ENCODE measurements at regions of chr4 and their contacts with region 1.

Region 1: GRCh38 chr4:75514131-75514948 is at the starts of genes RCHY1 and THAP6:
- DNase-seq: peak; percentile 90 to 94 (median 92)
- H3K4me3 ChIP-seq: peak within 1 kb of the TSS; percentile 46
- H3K27ac ChIP-seq: peak within 1 kb of the TSS; percentile 88 to 90
- H3K4me1 ChIP-seq: peaks cover 10% of the 10 kb centered on the region
- H3K27me3 ChIP-seq: no peaks in the 10 kb centered on the region
- CTCF ChIP-seq: peak in 2 of 3 donors; percentile 21 to 22
- EP300 ChIP-seq: peak; percentile 29
- POLR2A ChIP-seq: peak; percentile 94
- total RNA-seq, gene RCHY1: 14.6 to 40.3 (median 28.1) TPM
- total RNA-seq, gene THAP6: 10.0 to 30.7 (median 18.9) TPM

Region 2: DNA sequence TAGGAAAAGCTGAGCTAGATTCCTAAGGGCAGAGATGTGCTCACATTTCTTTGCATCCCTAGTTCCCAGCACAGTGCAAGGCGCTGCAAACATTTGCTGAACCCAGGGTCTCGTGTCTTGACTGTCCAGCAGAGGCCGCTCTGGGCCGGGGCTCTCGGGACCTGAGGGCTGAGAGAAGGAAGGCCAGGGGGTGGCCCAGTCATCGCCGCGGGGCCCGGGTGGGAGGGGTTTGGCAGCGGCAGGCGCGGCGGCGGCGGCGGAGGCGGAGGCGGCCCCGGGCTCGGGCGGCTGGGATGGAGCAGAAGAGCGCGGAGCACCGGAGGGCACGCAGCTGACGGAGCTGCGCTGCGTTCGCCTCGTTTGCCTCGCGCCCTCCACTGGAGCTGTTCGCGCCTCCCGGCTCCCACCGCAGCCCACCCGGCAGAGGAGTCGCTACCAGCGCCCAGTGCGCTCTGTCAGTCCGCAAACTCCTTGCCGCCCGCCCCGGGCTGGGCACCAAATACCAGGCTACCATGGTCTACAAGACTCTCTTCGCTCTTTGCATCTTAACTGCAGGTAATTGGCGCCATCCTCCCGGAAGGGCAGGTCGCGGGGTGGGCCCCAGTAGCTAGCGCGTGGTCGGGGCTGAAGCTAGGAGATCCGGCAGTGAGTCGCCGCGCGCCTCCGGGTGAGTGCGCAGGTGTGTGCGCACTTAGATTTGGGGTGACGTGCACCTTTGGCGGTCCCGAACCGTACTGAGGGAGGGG is 581.4 kb before region 1 on chr4 and contains the start of gene PARM1:
- intact Hi-C with region 1: loop called in 1 of 4 experiments (anchors 10 kb)
- DNase-seq: peak; percentile 69 to 88 (median 79)
- H3K4me3 ChIP-seq: peak within 1 kb of the TSS; percentile 78
- H3K27ac ChIP-seq: no peak within 1 kb of the TSS
- H3K4me1 ChIP-seq: peaks cover 1% of the 10 kb centered on the region
- H3K27me3 ChIP-seq: no peaks in the 10 kb centered on the region
- CTCF ChIP-seq: peak in 1 of 3 donors; percentile 46
- EP300 ChIP-seq: no peak
- POLR2A ChIP-seq: peak; percentile 20
- total RNA-seq, gene PARM1: 1.9 to 24.0 (median 12.6) TPM

Region 3: GRCh38 chr4:75666299-75666698 is 152.0 kb after region 1 on chr4:
- intact Hi-C with region 1: loop called in 1 of 4 experiments (anchors 10 kb)
- DNase-seq: no peak
- H3K4me3 ChIP-seq: no peak overlapping the region
- H3K27ac ChIP-seq: no peak overlapping the region
- H3K4me1 ChIP-seq: peaks cover 9% of the 10 kb centered on the region
- H3K27me3 ChIP-seq: no peaks in the 10 kb centered on the region
- CTCF ChIP-seq: no peak
- EP300 ChIP-seq: no peak
- POLR2A ChIP-seq: no peak

Measured in ovary (tissue), 10 donors.